BJ (cell line): ENCODE measurements at regions of chr6 and their contacts with region 1.

Region 1: DNA sequence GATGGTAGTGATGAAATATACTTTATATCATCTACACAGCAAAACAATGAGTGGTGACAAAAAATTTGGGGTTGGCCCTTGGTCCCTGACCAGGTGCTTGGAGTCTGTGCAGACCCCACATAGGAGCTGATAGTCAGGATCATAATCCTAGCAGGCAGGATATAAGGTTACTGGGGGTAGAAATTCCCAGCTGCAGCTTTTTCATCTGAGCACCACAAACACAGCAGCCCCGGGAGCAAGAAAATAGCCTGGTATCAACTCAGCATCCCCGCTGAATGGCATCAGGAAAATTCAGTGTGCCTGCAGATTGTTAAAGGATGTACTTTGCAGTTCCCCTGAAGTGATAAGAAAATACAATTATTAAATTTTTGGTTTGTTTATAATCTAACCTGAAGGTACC is 27.8 kb upstream of the RPL7L1 start:
- DNase-seq: no peak
- H3K4me3 ChIP-seq: no peak overlapping the region
- H3K27me3 ChIP-seq: no peaks in the 10 kb centered on the region
- CTCF ChIP-seq: no peak

Region 2: GRCh38 chr6:42831237-42831636 is 20.4 kb before region 1 on chr6:
- CTCF ChIA-PET with region 1: no interaction called
- POLR2A ChIA-PET with region 1: no interaction called
- DNase-seq: no peak
- H3K4me3 ChIP-seq: no peak overlapping the region
- H3K27me3 ChIP-seq: no peaks in the 10 kb centered on the region
- CTCF ChIP-seq: no peak

Region 3: DNA sequence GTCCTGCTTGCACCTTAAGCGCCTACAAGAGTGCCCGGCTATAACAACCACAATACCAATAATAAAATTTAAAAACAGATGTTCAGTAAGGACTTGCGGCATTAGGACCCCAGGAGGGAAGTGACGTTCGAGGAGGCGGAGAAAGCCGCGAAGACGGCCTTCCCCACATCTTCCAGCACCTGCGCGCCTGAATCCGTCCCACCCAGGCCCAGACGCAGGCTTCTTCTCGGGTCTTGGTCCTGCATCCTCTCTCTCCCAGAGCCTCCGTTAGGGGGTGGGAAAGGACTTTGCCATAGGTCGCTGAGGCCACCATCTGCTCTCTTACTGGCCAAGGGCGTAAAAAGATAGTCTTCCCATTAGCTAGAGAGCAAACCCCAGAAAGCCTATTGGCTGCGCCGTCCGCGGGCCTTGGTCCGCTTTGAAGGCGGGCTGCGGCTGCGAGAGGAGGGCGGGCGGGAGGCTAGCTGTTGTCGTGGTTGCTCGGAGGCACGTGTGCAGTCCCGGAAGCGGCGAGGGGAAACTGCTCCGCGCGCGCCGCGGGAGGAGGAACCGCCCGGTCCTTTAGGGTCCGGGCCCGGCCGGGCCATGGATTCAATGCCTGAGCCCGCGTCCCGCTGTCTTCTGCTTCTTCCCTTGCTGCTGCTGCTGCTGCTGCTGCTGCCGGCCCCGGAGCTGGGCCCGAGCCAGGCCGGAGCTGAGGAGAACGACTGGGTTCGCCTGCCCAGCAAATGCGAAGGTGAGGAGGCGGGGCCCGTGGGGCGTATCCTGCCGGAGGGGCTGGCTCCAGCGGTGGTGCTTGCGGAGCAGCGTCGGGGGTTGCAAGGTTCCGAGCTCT is 77.6 kb after region 1 on chr6 and contains the start of gene CNPY3:
- CTCF ChIA-PET with region 1: no interaction called
- POLR2A ChIA-PET with region 1: interaction called, 14 read pairs
- DNase-seq: peak; percentile 93
- H3K4me3 ChIP-seq: peak within 1 kb of the TSS; percentile 70
- H3K27me3 ChIP-seq: no peaks in the 10 kb centered on the region
- CTCF ChIP-seq: no peak
- polyA plus RNA-seq, gene CNPY3: 45.7 and 50.6 TPM in 2 replicates